ENCODE measurements at regions of chr3 and their contacts with region 1.

Region 1: GRCh38 chr3:197809356-197810020 is 18.4 kb downstream of the LRCH3 start:
- DNase-seq: no peak
- ATAC-seq: peak; percentile 47
- H3K4me3 ChIP-seq: no peak overlapping the region
- H3K27ac ChIP-seq: no peak overlapping the region
- H3K4me1 ChIP-seq: peaks cover 0 to 5% of the 10 kb centered on the region in 2 experiments; a peak in 3 of 5 replicates
- H3K27me3 ChIP-seq: no peaks in the 10 kb centered on the region
- CTCF ChIP-seq: no peak
- EP300 ChIP-seq: no peak
- POLR2A ChIP-seq: no peak
- RAD21 ChIP-seq: no peak

Region 2: GRCh38 chr3:197820550-197821335 is 11.3 kb after region 1 on chr3:
- CTCF ChIA-PET with region 1: no interaction called
- POLR2A ChIA-PET with region 1: interaction called, 14 read pairs
- in situ Hi-C with region 1: no loop called
- intact Hi-C with region 1: no loop called
- DNase-seq: no peak
- ATAC-seq: peak; percentile 45
- H3K4me3 ChIP-seq: no peak overlapping the region
- H3K27ac ChIP-seq: no peak overlapping the region
- H3K4me1 ChIP-seq: no peaks in the 10 kb centered on the region
- H3K27me3 ChIP-seq: no peaks in the 10 kb centered on the region
- CTCF ChIP-seq: no peak
- EP300 ChIP-seq: no peak
- POLR2A ChIP-seq: no peak
- RAD21 ChIP-seq: no peak

Region 3: GRCh38 chr3:197858598-197858997 is 49.1 kb after region 1 on chr3:
- CTCF ChIA-PET with region 1: no interaction called
- POLR2A ChIA-PET with region 1: no interaction called
- in situ Hi-C with region 1: no loop called
- intact Hi-C with region 1: no loop called
- DNase-seq: no peak
- ATAC-seq: no peak
- H3K4me3 ChIP-seq: no peak overlapping the region
- H3K27ac ChIP-seq: no peak overlapping the region
- H3K4me1 ChIP-seq: no peaks in the 10 kb centered on the region
- H3K27me3 ChIP-seq: no peaks in the 10 kb centered on the region
- CTCF ChIP-seq: no peak
- EP300 ChIP-seq: no peak
- POLR2A ChIP-seq: no peak
- RAD21 ChIP-seq: no peak